T-cell (primary cell): ENCODE measurements at regions of chr9 and their contacts with region 1.

Region 1: GRCh38 chr9:91465420-91465819 is 41.8 kb upstream of the NFIL3 start:
- DNase-seq: no peak
- ATAC-seq: no peak
- H3K4me3 ChIP-seq: no peak overlapping the region
- H3K4me3 Mint-ChIP-seq: no peak overlapping the region
- H3K27ac ChIP-seq: no peak overlapping the region
- H3K27ac Mint-ChIP-seq: no peak overlapping the region
- H3K4me1 ChIP-seq: no peaks in the 10 kb centered on the region
- H3K4me1 Mint-ChIP-seq: no peaks in the 10 kb centered on the region
- H3K27me3 ChIP-seq: no peaks in the 10 kb centered on the region
- H3K27me3 Mint-ChIP-seq: peaks cover 16 to 28% of the 10 kb centered on the region in 2 donors

Region 2: GRCh38 chr9:91496351-91496750 is 30.9 kb after region 1 on chr9:
- CTCF ChIA-PET with region 1: interaction called in 1 of 2 experiments, 10 read pairs
- POLR2A ChIA-PET with region 1: no interaction called
- DNase-seq: no peak
- ATAC-seq: no peak
- H3K4me3 ChIP-seq: no peak overlapping the region
- H3K4me3 Mint-ChIP-seq: no peak overlapping the region
- H3K27ac ChIP-seq: no peak overlapping the region
- H3K27ac Mint-ChIP-seq: no peak overlapping the region
- H3K4me1 ChIP-seq: no peaks in the 10 kb centered on the region
- H3K4me1 Mint-ChIP-seq: no peaks in the 10 kb centered on the region
- H3K27me3 ChIP-seq: peaks cover 0 to 14% of the 10 kb centered on the region in 2 experiments
- H3K27me3 Mint-ChIP-seq: peaks cover 10 to 16% of the 10 kb centered on the region in 2 donors

Region 3: GRCh38 chr9:91536211-91536691 is 70.8 kb after region 1 on chr9:
- CTCF ChIA-PET with region 1: no interaction called
- POLR2A ChIA-PET with region 1: no interaction called
- DNase-seq: no peak
- ATAC-seq: no peak
- H3K4me3 ChIP-seq: no peak overlapping the region
- H3K4me3 Mint-ChIP-seq: no peak overlapping the region
- H3K27ac ChIP-seq: no peak overlapping the region
- H3K27ac Mint-ChIP-seq: no peak overlapping the region
- H3K4me1 ChIP-seq: no peaks in the 10 kb centered on the region
- H3K4me1 Mint-ChIP-seq: peaks cover 9 to 11% (median 10%) of the 10 kb centered on the region in 3 donors
- H3K27me3 ChIP-seq: peaks cover 0 to 15% of the 10 kb centered on the region in 2 experiments
- H3K27me3 Mint-ChIP-seq: peaks cover 12 to 23% of the 10 kb centered on the region in 2 donors